Activated CD4-positive, alpha-beta T cell treated with anti-CD3 and anti-CD28 coated beads, Interleukin-2, amount 10 ng/mL, durations not matched to agents 24 days and 14 days (primary cell): ENCODE measurements at regions of chr4 and their contacts with region 1.

Region 1: DNA sequence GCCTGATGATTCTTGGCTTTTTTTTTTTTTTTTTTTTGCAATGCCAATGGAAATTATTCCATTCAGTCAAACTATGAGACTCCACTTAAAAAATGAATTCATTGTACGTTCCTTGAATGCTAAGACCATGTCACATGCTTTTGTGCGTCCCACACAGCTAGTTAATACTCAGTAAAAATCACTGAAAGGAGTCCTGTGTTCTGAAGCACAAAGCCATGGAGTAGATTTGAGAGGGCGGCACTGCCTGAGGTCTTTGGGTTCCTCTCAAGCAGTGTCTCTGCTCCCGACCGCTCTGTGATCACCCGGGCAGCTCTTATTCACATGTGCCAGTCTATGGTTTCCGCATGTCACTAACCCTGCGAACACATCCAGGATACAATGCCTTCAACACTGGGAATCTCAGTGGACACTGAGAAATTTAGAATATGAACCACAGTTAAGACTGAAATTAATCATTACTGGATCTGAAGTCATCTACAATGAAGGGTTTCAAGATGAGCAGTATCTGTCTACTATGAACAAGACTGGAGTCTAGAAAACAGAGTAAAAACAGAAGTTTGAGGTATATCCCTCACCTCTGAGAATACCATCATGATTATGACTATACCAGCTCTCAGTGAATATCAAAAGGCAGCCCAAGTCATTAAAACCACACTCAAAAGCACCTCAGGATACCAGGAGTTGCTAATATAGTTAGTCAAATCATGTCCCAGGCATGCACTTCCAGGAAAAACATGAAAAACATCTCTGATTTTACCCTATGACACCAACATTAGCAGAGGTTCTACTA is 193.0 kb downstream of the MGST2 start:
- DNase-seq: no peak
- H3K4me3 Mint-ChIP-seq: no peak overlapping the region
- H3K27ac Mint-ChIP-seq: peak overlapping the region; percentile 1
- H3K4me1 Mint-ChIP-seq: peaks cover 17% of the 10 kb centered on the region
- H3K27me3 Mint-ChIP-seq: peaks cover 24% of the 10 kb centered on the region

Region 2: GRCh38 chr4:139266583-139267257 is 591.9 kb before region 1 on chr4:
- intact Hi-C with region 1: loop called (anchors 5 kb)
- DNase-seq: peak; percentile 90
- H3K4me3 Mint-ChIP-seq: peak overlapping the region; percentile 68
- H3K27ac Mint-ChIP-seq: peak overlapping the region; percentile 78
- H3K4me1 Mint-ChIP-seq: peaks cover 21% of the 10 kb centered on the region
- H3K27me3 Mint-ChIP-seq: peaks cover 18% of the 10 kb centered on the region

Region 3: DNA sequence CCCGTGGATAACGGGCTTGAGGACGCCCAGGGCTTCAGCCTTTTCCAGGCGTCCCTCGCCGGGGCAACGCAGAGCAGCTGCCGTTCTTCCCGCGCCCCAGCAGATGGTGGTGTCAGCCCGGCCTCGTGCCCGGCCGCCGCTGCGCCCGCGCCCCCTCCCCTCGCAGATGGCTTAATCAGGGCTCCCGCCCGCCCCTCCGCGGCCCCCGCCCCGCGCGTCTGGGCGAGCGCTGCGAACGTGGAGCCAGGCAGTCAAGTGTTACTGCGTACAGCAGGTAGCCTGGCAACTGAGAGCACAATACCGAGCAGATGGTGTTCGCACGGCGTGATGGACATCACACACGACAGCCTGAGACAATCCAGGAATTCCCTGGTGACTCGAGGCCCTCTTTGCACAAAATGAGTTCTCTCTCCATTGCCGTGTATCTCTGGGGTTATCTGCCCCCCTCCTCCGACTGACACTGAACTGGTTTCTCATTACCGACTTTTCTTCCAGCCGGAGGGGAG is 123.7 kb before region 1 on chr4:
- intact Hi-C with region 1: loop called (anchors 1 kb)
- DNase-seq: peak; percentile 86
- H3K4me3 Mint-ChIP-seq: peak overlapping the region; percentile 76
- H3K27ac Mint-ChIP-seq: peak overlapping the region; percentile 43
- H3K4me1 Mint-ChIP-seq: peaks cover 7% of the 10 kb centered on the region
- H3K27me3 Mint-ChIP-seq: peaks cover 53% of the 10 kb centered on the region

Region 4: GRCh38 chr4:139901531-139902320 is 43.1 kb after region 1 on chr4:
- intact Hi-C with region 1: loop called (anchors 2 kb)
- DNase-seq: no peak
- H3K4me3 Mint-ChIP-seq: no peak overlapping the region
- H3K27ac Mint-ChIP-seq: no peak overlapping the region
- H3K4me1 Mint-ChIP-seq: peaks cover 18% of the 10 kb centered on the region
- H3K27me3 Mint-ChIP-seq: no peaks in the 10 kb centered on the region

Region 5: GRCh38 chr4:139978692-139979091 is 120.1 kb after region 1 on chr4:
- intact Hi-C with region 1: loop called (anchors 2 kb)
- DNase-seq: peak; percentile 69
- H3K4me3 Mint-ChIP-seq: peak overlapping the region; percentile 40
- H3K27ac Mint-ChIP-seq: peak overlapping the region; percentile 86
- H3K4me1 Mint-ChIP-seq: peaks cover 35% of the 10 kb centered on the region
- H3K27me3 Mint-ChIP-seq: peaks cover 4% of the 10 kb centered on the region

Region 6: DNA sequence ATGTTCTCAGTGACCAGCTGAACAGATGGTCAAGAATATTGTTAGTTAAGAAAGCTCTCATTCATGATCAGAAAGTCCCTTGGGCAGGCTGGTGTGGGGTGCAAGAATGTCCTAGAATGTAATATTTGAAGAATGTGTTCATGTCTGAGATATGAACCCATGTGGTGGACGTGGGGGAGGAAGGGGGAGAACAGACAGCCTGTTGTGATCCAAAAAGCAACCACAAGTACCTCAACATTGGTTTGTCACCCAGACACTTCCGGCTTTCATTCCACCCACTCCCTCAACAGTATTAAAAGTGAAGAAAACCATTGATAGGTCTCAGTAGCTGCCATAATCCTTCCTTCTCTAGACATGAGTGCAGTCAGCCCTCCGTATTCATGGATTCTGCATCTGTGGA is 213.2 kb after region 1 on chr4:
- intact Hi-C with region 1: loop called (anchors 5 kb)
- DNase-seq: peak; percentile 89
- H3K4me3 Mint-ChIP-seq: peak overlapping the region; percentile 73
- H3K27ac Mint-ChIP-seq: peak overlapping the region; percentile 83
- H3K4me1 Mint-ChIP-seq: peaks cover 44% of the 10 kb centered on the region
- H3K27me3 Mint-ChIP-seq: peaks cover 41% of the 10 kb centered on the region

Region 7: GRCh38 chr4:140252742-140253555 is 394.3 kb after region 1 on chr4:
- intact Hi-C with region 1: loop called (anchors 5 kb)
- DNase-seq: peak; percentile 89
- H3K4me3 Mint-ChIP-seq: peak overlapping the region; percentile 62
- H3K27ac Mint-ChIP-seq: no peak overlapping the region
- H3K4me1 Mint-ChIP-seq: peaks cover 28% of the 10 kb centered on the region
- H3K27me3 Mint-ChIP-seq: peaks cover 23% of the 10 kb centered on the region